ENCODE measurements at regions of chr22 and their contacts with region 1.

Region 1: DNA sequence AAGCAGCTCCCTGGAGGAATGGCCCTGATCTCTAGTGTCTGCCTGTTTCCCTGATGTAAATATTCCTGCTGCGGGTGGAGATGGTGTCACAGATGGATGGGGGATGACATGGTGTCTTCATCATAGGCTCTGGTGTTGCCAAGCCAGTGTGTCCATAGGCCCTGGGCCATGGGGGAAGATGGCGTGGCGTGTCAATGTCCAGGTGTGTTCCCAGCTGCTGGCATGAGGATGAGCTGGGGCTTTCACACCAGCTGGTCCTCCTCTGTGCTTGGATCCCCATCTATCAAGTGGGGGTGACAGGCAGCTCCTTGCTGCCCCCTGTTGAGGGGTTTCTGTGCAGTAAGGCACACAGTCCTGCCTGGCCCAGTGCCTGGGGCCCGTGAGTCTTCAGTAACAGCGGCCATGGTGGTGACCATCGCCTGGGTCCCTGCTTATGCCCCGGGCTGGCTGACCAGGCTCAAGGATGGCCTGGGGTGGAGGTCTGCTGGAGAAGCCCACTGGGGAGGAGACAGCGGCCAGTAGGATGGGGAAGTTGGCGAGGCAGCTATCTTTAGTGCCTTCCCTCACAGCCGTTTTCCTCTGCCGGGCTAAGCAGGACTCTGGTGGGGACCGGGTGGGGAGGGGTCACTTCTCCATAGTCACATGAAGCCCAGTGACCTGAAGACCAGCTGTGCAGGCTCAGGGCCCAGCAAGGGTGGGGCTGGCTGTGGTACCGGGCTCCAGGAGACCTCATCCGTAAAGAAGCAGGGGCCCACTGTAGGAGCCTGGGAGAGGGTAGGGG is 12.7 kb downstream of the RPL3 start:
- DNase-seq: no peak
- ATAC-seq: no peak
- H3K4me3 ChIP-seq: no peak overlapping the region
- H3K27ac ChIP-seq: no peak overlapping the region
- H3K4me1 ChIP-seq: peaks cover 52 to 64% of the 10 kb centered on the region in 2 experiments
- H3K27me3 ChIP-seq: no peaks in the 10 kb centered on the region
- CTCF ChIP-seq: peak in 2 of 3 experiments; percentile 53 to 75; a peak in 4 of 6 replicates
- POLR2A ChIP-seq: no peak
- RAD21 ChIP-seq: no peak

Region 2: DNA sequence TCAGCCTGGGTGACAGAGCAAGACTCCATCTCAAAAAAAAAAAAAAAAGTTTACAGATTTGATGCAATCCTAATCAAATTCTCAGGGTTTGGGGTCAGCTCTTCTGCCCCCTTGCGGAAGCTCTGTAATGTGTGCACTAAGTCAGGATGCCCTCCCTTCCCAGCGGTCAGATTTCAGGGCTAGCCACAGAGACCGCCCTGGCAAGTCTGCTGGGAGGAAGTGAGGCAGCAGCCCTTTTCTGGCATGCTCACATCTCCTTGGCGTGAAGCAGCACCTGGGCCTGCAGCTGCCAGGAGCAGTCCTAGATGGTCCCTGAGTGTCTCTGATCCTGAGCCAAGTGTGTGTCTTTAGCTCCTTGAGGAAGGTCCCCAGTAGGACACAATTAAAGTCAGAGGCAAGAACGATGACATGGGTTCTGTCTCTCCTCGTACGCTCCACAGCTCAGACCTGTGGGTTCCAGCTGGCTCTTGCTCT is 303.6 kb before region 1 on chr22:
- CTCF ChIA-PET with region 1: no interaction called
- POLR2A ChIA-PET with region 1: no interaction called
- RAD21 ChIA-PET with region 1: no interaction called
- intact Hi-C with region 1: loop called (anchors 5 kb)
- DNase-seq: peak; percentile 80
- ATAC-seq: peak; percentile 97
- H3K4me3 ChIP-seq: no peak overlapping the region
- H3K27ac ChIP-seq: peak overlapping the region; percentile 3; the same call in 1 of the 2 replicates
- H3K4me1 ChIP-seq: peaks cover 7 to 13% of the 10 kb centered on the region in 2 experiments; a peak in 3 of 4 replicates
- H3K27me3 ChIP-seq: no peaks in the 10 kb centered on the region
- CTCF ChIP-seq: peak; percentile 72 to 92 (median 75)
- POLR2A ChIP-seq: no peak
- RAD21 ChIP-seq: peak; percentile 86

Region 3: GRCh38 chr22:39170825-39171622 is 135.7 kb before region 1 on chr22:
- CTCF ChIA-PET with region 1: interaction called, 63 read pairs
- POLR2A ChIA-PET with region 1: interaction called, 27 read pairs
- RAD21 ChIA-PET with region 1: interaction called, 10 to 12 read pairs
- intact Hi-C with region 1: loop called (anchors 1 kb)
- DNase-seq: peak; percentile 50
- ATAC-seq: peak; percentile 87
- H3K4me3 ChIP-seq: no peak overlapping the region
- H3K27ac ChIP-seq: no peak overlapping the region
- H3K4me1 ChIP-seq: peaks cover 28 to 46% of the 10 kb centered on the region in 2 experiments
- H3K27me3 ChIP-seq: no peaks in the 10 kb centered on the region
- CTCF ChIP-seq: peak; percentile 90 to 97 (median 92)
- POLR2A ChIP-seq: no peak
- RAD21 ChIP-seq: peak; percentile 100

Region 4: DNA sequence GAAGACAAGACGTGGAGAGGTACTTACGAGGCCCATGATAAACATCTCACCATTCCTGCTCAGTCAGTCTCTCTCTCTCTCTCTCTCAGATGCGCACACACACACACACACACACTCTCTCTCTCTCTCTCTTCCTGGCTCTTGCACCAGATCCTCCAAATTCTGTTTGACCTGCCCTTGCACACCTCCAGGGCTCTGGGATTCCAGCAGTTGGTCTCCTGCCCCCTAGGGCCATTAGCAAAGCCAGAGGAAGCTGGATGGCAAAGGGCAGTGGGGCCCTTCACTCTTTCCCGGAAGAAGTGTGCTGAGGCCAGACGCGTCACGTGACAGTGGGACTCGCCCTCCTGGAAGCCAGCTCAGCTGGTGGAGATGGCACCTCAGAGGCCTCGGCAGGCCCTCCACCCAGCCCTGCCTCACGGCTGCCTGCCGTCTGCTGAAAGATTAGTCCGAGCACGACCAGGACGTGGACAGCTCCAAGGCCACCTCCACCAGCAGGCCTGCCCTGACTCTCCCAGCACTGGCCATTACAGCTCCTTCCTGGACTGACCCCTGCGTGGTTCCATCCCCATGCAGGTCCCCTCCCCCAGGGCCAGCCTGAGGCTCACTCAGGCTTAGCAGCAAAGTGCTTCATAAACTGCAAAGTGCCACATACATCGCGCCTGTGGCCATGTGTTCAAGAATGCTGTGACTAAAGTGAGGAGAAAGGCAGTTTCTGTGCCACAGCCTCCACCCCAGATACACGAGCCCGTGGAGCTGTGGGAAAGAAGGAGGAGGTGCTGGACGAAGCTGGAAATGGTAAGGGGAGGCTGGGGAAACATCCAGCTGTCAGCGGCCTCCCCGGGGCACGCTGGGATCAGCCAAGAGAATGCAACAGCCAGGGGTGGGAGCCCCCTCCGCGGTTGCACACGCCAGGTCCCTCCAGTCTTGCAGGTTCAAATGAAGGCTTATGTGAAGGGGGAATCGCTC is 65.7 kb before region 1 on chr22:
- CTCF ChIA-PET with region 1: interaction called, 9 read pairs
- POLR2A ChIA-PET with region 1: interaction called, 14 read pairs
- RAD21 ChIA-PET with region 1: interaction called, 3 read pairs
- intact Hi-C with region 1: loop called (anchors 2 kb)
- DNase-seq: peak; percentile 64
- ATAC-seq: peak; percentile 41
- H3K4me3 ChIP-seq: peak overlapping the region; percentile 80 to 96
- H3K27ac ChIP-seq: peak overlapping the region; percentile 94
- H3K4me1 ChIP-seq: peaks cover 52 to 75% of the 10 kb centered on the region in 2 experiments
- H3K27me3 ChIP-seq: no peaks in the 10 kb centered on the region
- CTCF ChIP-seq: no peak
- POLR2A ChIP-seq: no peak
- RAD21 ChIP-seq: no peak